ENCODE measurements at regions of chr14 and their contacts with region 1.

Region 1: DNA sequence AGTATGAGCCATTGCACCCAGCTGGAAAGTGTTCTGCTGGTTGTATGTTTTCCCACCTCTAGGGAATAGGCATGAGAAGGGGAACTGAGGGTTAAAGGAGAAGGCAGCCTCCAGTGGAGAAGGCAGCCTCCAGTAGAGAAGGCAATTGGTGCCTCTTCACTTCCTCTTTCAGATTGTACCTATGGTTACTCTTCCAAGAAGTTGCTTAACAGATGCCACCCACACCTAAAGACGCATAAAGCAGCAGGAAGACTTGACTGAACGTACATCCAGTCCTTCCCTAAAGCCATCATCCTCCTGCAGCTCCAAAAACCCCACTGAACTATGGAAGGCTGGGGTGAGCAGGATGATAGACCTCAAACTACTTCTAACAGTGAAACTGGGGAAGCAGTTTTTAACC is 13.1 kb downstream of the DPF3 start:
- DNase-seq: no peak
- H3K4me3 ChIP-seq: no peak overlapping the region
- H3K27ac ChIP-seq: no peak overlapping the region
- H3K4me1 ChIP-seq: peaks cover 0 to 7% (median 4%) of the 10 kb centered on the region in 4 experiments; a peak in 4 of 7 replicates
- H3K27me3 ChIP-seq: peaks cover 0 to 1% (median 0%) of the 10 kb centered on the region in 4 experiments; a peak in 1 of 7 replicates
- CTCF ChIP-seq: no peak
- EP300 ChIP-seq: no peak
- POLR2A ChIP-seq: no peak
- RAD21 ChIP-seq: no peak

Region 2: GRCh38 chr14:72801381-72801812 is 79.4 kb before region 1 on chr14:
- CTCF ChIA-PET with region 1: no interaction called
- POLR2A ChIA-PET with region 1: no interaction called
- DNase-seq: no peak
- H3K4me3 ChIP-seq: no peak overlapping the region
- H3K27ac ChIP-seq: no peak overlapping the region
- H3K4me1 ChIP-seq: peaks cover 7 to 17% (median 11%) of the 10 kb centered on the region in 4 experiments
- H3K27me3 ChIP-seq: peaks cover 3 to 41% (median 28%) of the 10 kb centered on the region in 4 experiments; a peak in 6 of 7 replicates
- CTCF ChIP-seq: no peak
- EP300 ChIP-seq: no peak
- POLR2A ChIP-seq: no peak
- RAD21 ChIP-seq: no peak

Region 3: DNA sequence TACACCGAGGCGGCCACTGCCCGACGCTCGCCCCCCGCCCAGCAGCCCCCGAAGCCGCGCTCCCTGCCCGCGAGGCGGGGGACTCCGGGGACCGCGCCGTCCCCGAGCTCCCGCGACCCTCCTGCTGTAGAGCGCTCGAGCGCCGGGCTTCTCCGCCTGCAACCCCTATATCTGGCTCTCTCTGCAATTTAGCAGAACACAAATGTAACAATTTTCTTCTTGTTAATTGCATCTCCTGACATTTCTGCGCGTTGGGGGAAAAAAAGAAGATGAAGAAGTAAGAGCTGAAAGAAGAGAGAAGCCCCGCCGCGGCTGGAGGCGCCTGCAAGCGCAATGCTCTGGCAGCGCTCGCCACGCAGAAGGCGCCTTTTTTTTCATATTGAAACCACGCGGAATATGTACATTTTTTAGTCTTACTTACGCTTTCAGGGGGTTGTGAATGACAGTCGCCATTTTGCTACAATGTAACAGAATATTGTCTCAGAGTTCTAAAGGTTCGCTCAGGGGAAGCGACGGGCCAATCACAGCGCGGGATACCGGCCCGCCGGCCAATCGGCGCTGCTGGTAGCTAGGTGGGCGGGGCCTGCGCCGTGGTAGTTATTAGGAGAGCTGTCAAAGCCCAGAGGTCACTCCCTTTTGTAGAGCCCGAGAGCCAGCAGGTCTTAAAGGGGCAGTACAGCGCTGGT is 13.0 kb after region 1 on chr14 and contains the start of gene DPF3:
- CTCF ChIA-PET with region 1: interaction called, 10 read pairs
- POLR2A ChIA-PET with region 1: interaction called, 7 read pairs
- DNase-seq: peak; percentile 80 to 96
- H3K4me3 ChIP-seq: peak within 1 kb of the TSS; percentile 58 to 83 (median 68)
- H3K27ac ChIP-seq: no peak within 1 kb of the TSS
- H3K4me1 ChIP-seq: peaks cover 12 to 24% (median 14%) of the 10 kb centered on the region in 4 experiments
- H3K27me3 ChIP-seq: peaks cover 20 to 59% (median 52%) of the 10 kb centered on the region in 4 experiments
- CTCF ChIP-seq: no peak
- EP300 ChIP-seq: no peak
- POLR2A ChIP-seq: no peak
- RAD21 ChIP-seq: no peak
- total RNA-seq, gene DPF3: 0.08 and 0.19 TPM in 2 replicates

Region 4: GRCh38 chr14:72926292-72927028 is 45.6 kb after region 1 on chr14 and contains the start of gene DCAF4:
- CTCF ChIA-PET with region 1: no interaction called
- POLR2A ChIA-PET with region 1: no interaction called
- DNase-seq: peak; percentile 90 to 91
- H3K4me3 ChIP-seq: peak within 1 kb of the TSS; percentile 66 to 78 (median 71)
- H3K27ac ChIP-seq: no peak within 1 kb of the TSS; the same call in 1 of the 2 replicates
- H3K4me1 ChIP-seq: peaks cover 0 to 2% (median under 1%) of the 10 kb centered on the region in 4 experiments; a peak in 4 of 7 replicates
- H3K27me3 ChIP-seq: peaks cover 0 to 10% (median 8%) of the 10 kb centered on the region in 4 experiments; a peak in 5 of 7 replicates
- CTCF ChIP-seq: no peak
- EP300 ChIP-seq: no peak
- POLR2A ChIP-seq: peak; percentile 59 to 63
- RAD21 ChIP-seq: no peak
- total RNA-seq, gene DCAF4: 16.8 and 21.1 TPM in 2 replicates